Activated B cell treated with CpG ODN at 0.5 μM for 24 hours (primary cell): ENCODE measurements at regions of chr22 and their contacts with region 1.

Region 1: GRCh38 chr22:17742527-17742902 is 31.8 kb downstream of the BID start:
- DNase-seq: peak; percentile 59
- ATAC-seq: peak; percentile 95
- H3K4me3 Mint-ChIP-seq: no peak overlapping the region
- H3K27ac Mint-ChIP-seq: no peak overlapping the region
- H3K4me1 Mint-ChIP-seq: peaks cover 9% of the 10 kb centered on the region
- H3K27me3 Mint-ChIP-seq: no peaks in the 10 kb centered on the region
- CTCF ChIP-seq: no peak

Region 2: DNA sequence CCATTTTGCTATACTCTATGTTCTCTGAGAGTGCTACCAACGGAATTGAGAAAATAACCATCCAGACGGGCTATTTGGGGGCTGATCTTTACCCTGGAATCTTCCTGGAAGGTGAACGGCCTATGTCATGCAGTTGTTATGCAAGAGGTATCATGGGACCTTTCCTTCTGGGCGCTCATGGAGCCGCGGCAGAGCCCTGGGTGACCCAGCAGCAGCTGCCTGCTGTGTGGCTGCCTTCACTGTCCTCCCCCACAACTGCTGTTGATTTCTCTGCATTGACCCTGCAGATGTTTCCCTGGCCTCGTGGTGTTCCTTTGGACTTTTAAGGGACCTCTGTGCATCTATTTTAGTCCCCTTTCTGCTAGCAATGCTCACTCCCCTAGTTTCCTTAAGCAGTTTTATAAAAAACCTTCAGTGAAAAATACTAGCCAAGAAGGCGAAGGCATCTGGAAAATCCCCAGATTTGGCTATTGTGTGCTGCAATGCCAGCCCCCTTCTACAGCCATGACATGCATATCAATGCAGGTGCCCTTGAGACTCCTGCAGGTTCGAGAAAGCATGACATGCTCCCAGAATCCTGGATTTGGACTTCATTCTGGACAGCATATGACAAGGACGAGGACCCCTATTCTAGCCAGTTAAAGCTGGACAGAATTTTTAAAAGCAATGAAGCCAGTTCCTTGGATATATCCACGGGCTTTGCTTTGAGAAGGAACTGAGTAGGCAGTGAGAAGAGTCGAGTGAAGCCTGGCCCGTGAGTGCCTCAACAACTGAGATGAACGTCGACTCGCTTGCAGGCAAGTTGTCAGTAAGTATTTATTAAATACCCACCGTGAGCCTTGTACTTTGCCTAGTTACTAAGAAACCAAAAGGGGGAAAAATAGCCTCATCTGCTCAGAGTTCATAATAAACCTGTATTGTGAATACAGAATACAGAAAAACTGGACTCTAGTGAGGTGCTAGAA is 179.3 kb before region 1 on chr22 and contains the start of gene SLC25A18:
- CTCF ChIA-PET with region 1: interaction called, 20 read pairs
- POLR2A ChIA-PET with region 1: no interaction called
- intact Hi-C with region 1: loop called (anchors 1 kb)
- DNase-seq: no peak
- ATAC-seq: no peak
- H3K4me3 Mint-ChIP-seq: no peak within 1 kb of the TSS
- H3K27ac Mint-ChIP-seq: no peak within 1 kb of the TSS
- H3K4me1 Mint-ChIP-seq: no peaks in the 10 kb centered on the region
- H3K27me3 Mint-ChIP-seq: peaks cover 5% of the 10 kb centered on the region
- CTCF ChIP-seq: no peak
- total RNA-seq, gene SLC25A18: 0.15 and 0.27 TPM in 2 replicates

Region 3: DNA sequence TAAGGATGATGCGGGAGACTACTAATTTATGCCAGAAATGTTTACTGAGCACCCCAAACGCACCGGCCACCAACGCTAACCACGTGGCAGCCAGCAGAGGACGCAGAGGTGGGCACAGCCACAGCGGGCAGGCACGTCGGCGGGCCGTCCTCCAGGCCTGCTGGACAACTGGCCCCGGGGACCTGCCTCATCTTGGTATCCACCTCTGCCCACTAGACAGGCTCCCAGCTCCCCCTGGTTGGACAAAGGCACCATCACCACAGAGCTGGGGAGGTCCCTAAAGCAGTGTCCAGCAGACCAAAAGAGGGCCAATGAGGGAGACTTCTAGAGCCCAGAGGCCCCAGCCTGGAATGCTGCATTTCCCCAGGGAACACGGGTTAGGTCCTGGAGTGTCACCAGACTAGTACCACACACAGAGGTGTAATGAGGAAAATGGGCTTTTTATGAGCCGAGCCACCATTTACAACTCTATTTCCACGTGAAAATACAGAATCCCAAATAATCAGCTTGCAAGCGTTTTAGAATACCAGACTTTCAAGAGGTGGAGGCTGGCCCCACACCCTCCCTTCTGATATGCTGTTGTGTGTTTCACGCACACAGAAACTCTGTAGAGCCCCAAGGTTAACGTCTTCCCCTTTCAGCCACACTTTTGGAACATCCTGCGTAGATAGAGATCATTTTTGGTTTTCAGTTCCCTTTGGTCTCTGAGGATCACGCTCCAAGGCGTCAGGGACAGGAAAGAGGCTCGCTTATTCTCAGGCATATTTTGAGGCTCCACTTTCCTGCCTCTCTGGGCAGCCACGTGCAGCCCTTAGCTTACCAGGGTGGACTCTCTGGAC is 55.4 kb after region 1 on chr22:
- CTCF ChIA-PET with region 1: interaction called, 15 read pairs
- POLR2A ChIA-PET with region 1: interaction called, 5 read pairs
- intact Hi-C with region 1: loop called (anchors 2 kb)
- DNase-seq: peak; percentile 41
- ATAC-seq: peak; percentile 62
- H3K4me3 Mint-ChIP-seq: peak overlapping the region; percentile 49
- H3K27ac Mint-ChIP-seq: peak overlapping the region; percentile 99
- H3K4me1 Mint-ChIP-seq: peaks cover 87% of the 10 kb centered on the region
- H3K27me3 Mint-ChIP-seq: no peaks in the 10 kb centered on the region
- CTCF ChIP-seq: no peak

Region 4: DNA sequence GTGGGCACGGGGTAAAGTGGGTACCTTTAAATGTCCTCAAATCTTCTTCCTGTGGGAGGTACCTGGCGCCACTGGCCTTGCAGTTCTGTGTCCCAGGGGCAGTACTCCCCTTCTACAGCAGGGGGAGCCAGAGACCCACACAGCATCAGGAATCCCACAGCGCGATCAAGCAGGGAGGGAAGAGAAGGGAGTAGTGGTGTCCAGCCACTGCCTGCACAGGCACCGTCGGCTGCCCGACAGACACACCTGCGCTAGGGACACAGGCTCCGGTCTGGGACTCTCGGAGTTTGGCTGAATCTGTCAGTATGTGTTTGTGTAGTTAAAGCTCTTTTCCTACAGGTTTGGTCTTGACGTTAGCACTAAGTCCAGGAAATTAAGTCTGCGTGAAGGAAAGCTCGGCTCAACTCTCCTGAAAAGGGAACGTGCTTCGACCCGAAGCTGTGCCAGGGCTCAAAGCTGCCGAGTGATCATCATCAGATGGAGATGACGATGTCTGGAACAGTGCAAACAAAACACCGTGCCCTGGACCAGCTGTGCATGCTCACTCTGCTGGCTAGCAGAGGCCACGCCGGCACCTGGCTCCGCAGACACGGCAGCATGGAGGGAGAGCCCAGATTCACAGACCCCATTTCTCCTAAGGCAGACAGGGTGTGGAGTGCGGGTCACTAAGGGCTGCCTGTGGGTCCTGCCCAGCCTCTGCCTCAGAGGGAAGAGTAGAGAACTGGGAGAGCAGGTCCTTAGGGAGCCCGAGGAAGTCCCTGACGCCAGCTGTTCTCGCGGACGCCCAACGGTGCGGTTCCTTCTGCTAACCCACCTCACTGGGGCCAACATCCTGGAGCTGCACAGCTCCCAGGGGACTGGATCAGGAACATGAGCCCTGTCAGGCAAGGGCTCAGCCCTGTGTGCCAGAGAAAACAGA is 87.8 kb after region 1 on chr22:
- CTCF ChIA-PET with region 1: interaction called, 45 read pairs
- POLR2A ChIA-PET with region 1: no interaction called
- intact Hi-C with region 1: loop called (anchors 1 kb)
- DNase-seq: peak; percentile 75
- ATAC-seq: peak; percentile 98
- H3K4me3 Mint-ChIP-seq: no peak overlapping the region
- H3K27ac Mint-ChIP-seq: peak overlapping the region; percentile 27
- H3K4me1 Mint-ChIP-seq: peaks cover 7% of the 10 kb centered on the region
- H3K27me3 Mint-ChIP-seq: no peaks in the 10 kb centered on the region
- CTCF ChIP-seq: peak; percentile 97